Panc1 (cell line): ENCODE measurements at regions of chr1 and their contacts with region 1.

Region 1: GRCh38 chr1:201877877-201878401 is 10.8 kb upstream of the SHISA4 start:
- DNase-seq: no peak
- ATAC-seq: peak; percentile 55; the same call in 1 of the 2 replicates
- H3K4me3 ChIP-seq: no peak overlapping the region
- H3K27ac ChIP-seq: no peak overlapping the region
- H3K4me1 ChIP-seq: no peaks in the 10 kb centered on the region
- H3K27me3 ChIP-seq: no peaks in the 10 kb centered on the region
- CTCF ChIP-seq: peak; percentile 84

Region 2: DNA sequence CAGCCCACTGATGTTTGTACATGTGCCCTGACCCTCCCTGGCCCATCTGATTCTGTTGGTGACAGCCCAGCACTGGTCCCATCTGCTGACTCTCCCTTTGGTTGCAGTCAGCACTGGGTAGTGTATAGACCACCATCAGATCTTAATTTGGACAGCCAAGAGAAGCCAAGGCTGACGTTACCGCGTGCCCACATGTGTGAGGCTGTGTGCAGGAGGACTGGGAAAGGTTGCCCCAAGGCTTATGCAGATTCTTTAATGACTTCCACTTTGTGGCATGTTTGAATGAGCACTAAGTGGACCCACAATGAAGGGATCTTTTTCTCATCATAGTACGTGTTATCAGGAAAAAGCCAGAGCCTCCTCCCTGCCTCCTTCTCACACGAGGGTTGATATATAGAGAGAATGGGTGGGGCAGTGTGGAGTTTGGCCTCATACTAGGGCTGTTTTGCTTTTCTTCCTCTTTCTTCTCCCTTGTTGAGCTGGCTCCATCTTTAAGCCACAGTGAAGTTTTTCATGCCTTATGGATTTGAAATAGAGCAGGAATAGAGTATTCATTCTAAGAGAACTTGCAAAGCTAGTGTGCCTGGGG is 245.5 kb before region 1 on chr1:
- CTCF ChIA-PET with region 1: interaction called, 11 read pairs
- POLR2A ChIA-PET with region 1: no interaction called
- in situ Hi-C with region 1: no loop called
- intact Hi-C with region 1: no loop called
- DNase-seq: no peak
- ATAC-seq: no peak
- H3K4me3 ChIP-seq: no peak overlapping the region
- H3K27ac ChIP-seq: no peak overlapping the region
- H3K4me1 ChIP-seq: no peaks in the 10 kb centered on the region
- H3K27me3 ChIP-seq: no peaks in the 10 kb centered on the region
- CTCF ChIP-seq: no peak

Region 3: DNA sequence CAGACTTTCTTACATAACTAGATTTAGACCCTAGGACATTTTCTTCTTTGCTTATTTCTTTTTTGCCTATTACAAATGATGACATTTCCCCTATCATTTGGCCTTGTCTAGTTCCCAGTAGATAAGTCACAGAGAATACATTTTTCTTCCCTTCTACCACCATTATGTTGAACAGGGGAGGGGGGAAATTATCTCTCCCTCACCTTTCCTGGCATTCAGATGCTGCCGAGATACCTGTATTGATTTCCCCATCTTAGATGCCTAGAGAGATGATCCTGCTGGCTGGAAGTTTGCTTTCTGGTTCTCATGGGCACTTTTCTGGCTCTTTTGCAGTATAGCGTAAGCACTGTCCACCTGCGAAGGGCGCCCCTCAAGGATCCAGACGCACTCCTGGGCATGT is 43.3 kb before region 1 on chr1:
- CTCF ChIA-PET with region 1: no interaction called
- POLR2A ChIA-PET with region 1: interaction called, 10 read pairs
- in situ Hi-C with region 1: no loop called
- intact Hi-C with region 1: no loop called
- DNase-seq: no peak
- ATAC-seq: no peak
- H3K4me3 ChIP-seq: no peak overlapping the region
- H3K27ac ChIP-seq: no peak overlapping the region
- H3K4me1 ChIP-seq: peaks cover 22% of the 10 kb centered on the region
- H3K27me3 ChIP-seq: no peaks in the 10 kb centered on the region
- CTCF ChIP-seq: no peak

Region 4: GRCh38 chr1:201850053-201850397 is 27.9 kb before region 1 on chr1:
- CTCF ChIA-PET with region 1: no interaction called
- POLR2A ChIA-PET with region 1: no interaction called
- in situ Hi-C with region 1: no loop called
- intact Hi-C with region 1: no loop called
- DNase-seq: peak; percentile 53
- ATAC-seq: peak; percentile 37; the same call in 1 of the 2 replicates
- H3K4me3 ChIP-seq: no peak overlapping the region
- H3K27ac ChIP-seq: no peak overlapping the region
- H3K4me1 ChIP-seq: no peaks in the 10 kb centered on the region
- H3K27me3 ChIP-seq: no peaks in the 10 kb centered on the region
- CTCF ChIP-seq: no peak

Region 5: GRCh38 chr1:201903135-201903534 is 25.2 kb after region 1 on chr1:
- CTCF ChIA-PET with region 1: no interaction called
- POLR2A ChIA-PET with region 1: interaction called, 10 read pairs
- in situ Hi-C with region 1: no loop called
- intact Hi-C with region 1: no loop called
- DNase-seq: no peak
- ATAC-seq: no peak
- H3K4me3 ChIP-seq: no peak overlapping the region
- H3K27ac ChIP-seq: no peak overlapping the region
- H3K4me1 ChIP-seq: no peaks in the 10 kb centered on the region
- H3K27me3 ChIP-seq: no peaks in the 10 kb centered on the region
- CTCF ChIP-seq: no peak

Region 6: GRCh38 chr1:202034683-202035462 is 156.9 kb after region 1 on chr1:
- CTCF ChIA-PET with region 1: no interaction called
- POLR2A ChIA-PET with region 1: interaction called, 13 read pairs
- in situ Hi-C with region 1: no loop called
- intact Hi-C with region 1: no loop called
- DNase-seq: no peak
- ATAC-seq: peak; percentile 86
- H3K4me3 ChIP-seq: no peak overlapping the region
- H3K27ac ChIP-seq: peak overlapping the region; percentile 76
- H3K4me1 ChIP-seq: peaks cover 20% of the 10 kb centered on the region
- H3K27me3 ChIP-seq: no peaks in the 10 kb centered on the region
- CTCF ChIP-seq: no peak

Region 7: GRCh38 chr1:202112839-202113672 is 235.1 kb after region 1 on chr1:
- CTCF ChIA-PET with region 1: no interaction called
- POLR2A ChIA-PET with region 1: no interaction called
- in situ Hi-C with region 1: no loop called
- intact Hi-C with region 1: loop called (anchors 10 kb)
- DNase-seq: no peak
- ATAC-seq: peak; percentile 62
- H3K4me3 ChIP-seq: no peak overlapping the region
- H3K27ac ChIP-seq: peak overlapping the region; percentile 69
- H3K4me1 ChIP-seq: peaks cover 41% of the 10 kb centered on the region
- H3K27me3 ChIP-seq: no peaks in the 10 kb centered on the region
- CTCF ChIP-seq: no peak

Region 8: DNA sequence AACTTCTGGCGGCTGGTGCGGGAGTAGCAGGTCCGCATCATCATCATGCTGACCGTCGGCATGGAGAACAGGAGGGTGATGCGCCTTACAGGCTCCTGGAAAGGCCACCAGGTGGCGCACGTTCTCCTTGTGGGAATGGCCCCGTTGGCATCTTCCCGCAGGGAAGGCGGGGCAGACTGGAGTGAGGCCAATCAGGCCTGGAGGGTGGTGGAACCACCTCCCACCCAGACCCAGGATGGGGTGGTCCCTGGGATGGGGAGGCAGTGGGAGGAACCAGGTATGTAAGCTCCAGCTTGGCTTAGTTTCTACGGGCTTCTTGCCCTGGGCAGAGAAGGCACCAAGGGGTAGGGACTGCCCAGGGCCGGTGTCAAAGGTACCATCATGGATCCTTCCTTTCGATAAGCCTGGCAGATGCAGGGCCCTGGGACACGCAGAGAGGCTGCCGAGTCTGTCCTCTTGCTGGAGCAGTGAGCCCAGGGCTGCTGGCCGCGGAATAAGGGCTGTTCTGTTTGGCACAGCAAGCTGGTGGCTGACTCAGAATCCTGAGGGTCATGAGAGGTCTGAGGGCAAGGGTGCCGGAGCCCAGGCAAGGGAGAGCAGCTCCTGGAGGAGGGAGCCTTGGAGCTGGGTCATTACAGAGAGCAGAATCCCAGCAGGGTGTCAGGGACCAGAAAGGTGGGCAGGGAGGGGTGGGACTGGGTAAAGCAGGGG is 307.0 kb after region 1 on chr1:
- CTCF ChIA-PET with region 1: no interaction called
- POLR2A ChIA-PET with region 1: no interaction called
- in situ Hi-C with region 1: no loop called
- intact Hi-C with region 1: no loop called
- DNase-seq: peak; percentile 58
- ATAC-seq: peak; percentile 84
- H3K4me3 ChIP-seq: peak overlapping the region in 1 of 2 experiments; percentile 23; a peak in 2 of 4 replicates
- H3K27ac ChIP-seq: no peak overlapping the region
- H3K4me1 ChIP-seq: peaks cover 7% of the 10 kb centered on the region
- H3K27me3 ChIP-seq: no peaks in the 10 kb centered on the region
- CTCF ChIP-seq: peak; percentile 93